Stomach (tissue), 19 donors: ENCODE measurements at regions of chr9 and their contacts with region 1.

Region 1: GRCh38 chr9:127802576-127803443 is at the start of gene FPGS:
- DNase-seq: peak; percentile 89 to 96
- H3K4me3 ChIP-seq: peak within 1 kb of the TSS; percentile 54 to 72 (median 58)
- H3K27ac ChIP-seq: peak within 1 kb of the TSS; percentile 93 to 99 (median 96)
- H3K4me1 ChIP-seq: peaks cover 30 to 63% (median 37%) of the 10 kb centered on the region in 4 donors
- H3K27me3 ChIP-seq: no peaks in the 10 kb centered on the region
- CTCF ChIP-seq: no peak
- EP300 ChIP-seq: no peak
- POLR2A ChIP-seq: peak in 1 of 4 donors; percentile 48
- total RNA-seq, gene FPGS: 67.0 to 235 (median 97.1) TPM

Region 2: GRCh38 chr9:126763130-126763764 is 1039.6 kb before region 1 on chr9:
- intact Hi-C with region 1: no loop called
- DNase-seq: no peak
- H3K4me3 ChIP-seq: no peak overlapping the region
- H3K27ac ChIP-seq: no peak overlapping the region
- H3K4me1 ChIP-seq: no peaks in the 10 kb centered on the region
- H3K27me3 ChIP-seq: peaks cover 0 to 27% (median 3%) of the 10 kb centered on the region in 3 donors
- CTCF ChIP-seq: no peak
- EP300 ChIP-seq: no peak
- POLR2A ChIP-seq: no peak

Region 3: DNA sequence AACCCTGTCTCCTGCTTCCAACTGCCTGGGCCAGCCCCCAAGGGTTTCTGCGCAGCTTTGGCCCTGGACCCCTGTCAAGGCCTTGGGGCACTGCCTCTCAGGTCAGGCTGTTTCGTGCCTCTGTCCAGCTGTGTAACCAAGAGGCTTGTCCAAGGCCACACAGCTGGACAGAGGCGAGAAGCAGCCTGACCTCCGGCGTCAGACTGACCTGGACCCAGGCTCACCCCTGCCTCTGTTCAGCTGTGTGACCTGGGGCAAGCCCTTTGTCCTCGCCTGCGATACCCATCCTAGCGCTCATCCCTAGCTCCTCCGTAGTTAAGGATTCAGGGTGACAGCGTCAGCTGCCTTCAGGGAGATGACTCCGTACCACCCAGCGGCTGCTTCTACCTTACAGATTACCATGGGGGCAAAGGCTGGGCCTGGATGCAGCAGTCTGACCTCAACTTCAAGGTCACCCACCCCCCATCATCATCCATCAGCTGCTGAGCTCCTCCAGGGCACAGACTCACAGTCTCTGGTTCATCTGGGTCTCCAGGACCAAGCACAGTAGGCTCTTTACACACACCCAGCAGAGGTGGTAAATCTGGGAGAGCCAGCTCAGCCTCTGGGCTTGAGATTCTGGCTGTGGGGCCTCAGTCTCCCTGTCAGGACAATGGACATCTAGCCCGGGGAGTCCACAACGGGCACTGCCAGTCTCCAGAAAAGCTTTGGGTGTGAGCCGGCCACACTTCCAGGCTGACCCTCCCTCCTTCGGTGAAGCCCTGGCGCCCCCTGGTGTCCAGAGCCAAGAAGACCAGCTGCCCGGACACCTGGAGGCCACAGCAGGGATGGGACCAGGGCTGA is 66.7 kb after region 1 on chr9:
- intact Hi-C with region 1: loop called (anchors 10 kb)
- DNase-seq: peak; percentile 90 to 92
- H3K4me3 ChIP-seq: no peak overlapping the region
- H3K27ac ChIP-seq: peak overlapping the region in 2 of 5 donors; percentile 14 to 35
- H3K4me1 ChIP-seq: peaks cover 11 to 16% (median 14%) of the 10 kb centered on the region in 4 donors
- H3K27me3 ChIP-seq: no peaks in the 10 kb centered on the region
- CTCF ChIP-seq: peak in 5 of 7 experiments; percentile 56 to 96 (median 82)
- EP300 ChIP-seq: no peak
- POLR2A ChIP-seq: no peak